Esophagus muscularis mucosa (tissue), 4 donors: ENCODE measurements at regions of chr19 and their contacts with region 1.

Region 1: DNA sequence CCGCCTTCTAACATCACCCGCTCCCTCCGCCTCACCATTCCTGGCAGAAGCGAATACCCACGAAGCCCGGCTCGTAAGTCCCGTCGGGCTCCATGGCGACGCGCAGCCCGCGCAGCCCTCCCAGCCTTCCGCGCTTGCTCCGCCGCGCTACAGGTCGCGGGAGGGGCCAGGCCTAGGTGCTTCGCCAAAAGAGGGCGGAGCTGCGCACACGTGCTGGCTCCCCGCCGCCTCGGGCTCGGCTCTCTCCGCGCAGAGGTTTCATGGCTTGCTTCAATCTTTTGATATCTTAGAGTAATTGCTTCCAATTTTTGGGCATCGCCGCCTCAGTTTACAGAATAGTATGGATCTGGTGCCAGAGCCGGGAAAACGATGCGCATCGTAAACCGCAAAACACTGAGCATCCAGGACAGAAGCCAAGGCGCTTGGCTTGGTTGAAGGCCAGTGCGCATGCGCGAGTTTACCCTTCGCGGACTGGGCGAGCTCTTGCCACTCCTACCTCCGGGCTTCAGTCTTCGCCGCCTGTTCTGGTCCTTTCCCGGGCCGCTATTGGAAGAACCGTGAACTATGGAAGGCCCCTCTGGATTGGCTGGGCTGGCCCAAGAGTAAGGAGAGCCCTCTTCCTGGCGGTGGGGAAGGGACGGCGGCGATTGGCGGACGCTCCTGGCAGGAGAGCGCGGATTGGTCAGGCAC is at the start of gene POLR2I:
- DNase-seq: peak; percentile 100
- H3K4me3 ChIP-seq: peak within 1 kb of the TSS; percentile 72 to 80 (median 74)
- H3K27ac ChIP-seq: peak within 1 kb of the TSS; percentile 88 to 96 (median 91)
- H3K4me1 ChIP-seq: peaks cover 23 to 53% (median 38%) of the 10 kb centered on the region in 4 donors
- H3K27me3 ChIP-seq: no peaks in the 10 kb centered on the region
- CTCF ChIP-seq: no peak
- EP300 ChIP-seq: no peak
- POLR2A ChIP-seq: peak; percentile 65
- total RNA-seq, gene POLR2I: 64.8 to 152 (median 85.7) TPM

Region 2: DNA sequence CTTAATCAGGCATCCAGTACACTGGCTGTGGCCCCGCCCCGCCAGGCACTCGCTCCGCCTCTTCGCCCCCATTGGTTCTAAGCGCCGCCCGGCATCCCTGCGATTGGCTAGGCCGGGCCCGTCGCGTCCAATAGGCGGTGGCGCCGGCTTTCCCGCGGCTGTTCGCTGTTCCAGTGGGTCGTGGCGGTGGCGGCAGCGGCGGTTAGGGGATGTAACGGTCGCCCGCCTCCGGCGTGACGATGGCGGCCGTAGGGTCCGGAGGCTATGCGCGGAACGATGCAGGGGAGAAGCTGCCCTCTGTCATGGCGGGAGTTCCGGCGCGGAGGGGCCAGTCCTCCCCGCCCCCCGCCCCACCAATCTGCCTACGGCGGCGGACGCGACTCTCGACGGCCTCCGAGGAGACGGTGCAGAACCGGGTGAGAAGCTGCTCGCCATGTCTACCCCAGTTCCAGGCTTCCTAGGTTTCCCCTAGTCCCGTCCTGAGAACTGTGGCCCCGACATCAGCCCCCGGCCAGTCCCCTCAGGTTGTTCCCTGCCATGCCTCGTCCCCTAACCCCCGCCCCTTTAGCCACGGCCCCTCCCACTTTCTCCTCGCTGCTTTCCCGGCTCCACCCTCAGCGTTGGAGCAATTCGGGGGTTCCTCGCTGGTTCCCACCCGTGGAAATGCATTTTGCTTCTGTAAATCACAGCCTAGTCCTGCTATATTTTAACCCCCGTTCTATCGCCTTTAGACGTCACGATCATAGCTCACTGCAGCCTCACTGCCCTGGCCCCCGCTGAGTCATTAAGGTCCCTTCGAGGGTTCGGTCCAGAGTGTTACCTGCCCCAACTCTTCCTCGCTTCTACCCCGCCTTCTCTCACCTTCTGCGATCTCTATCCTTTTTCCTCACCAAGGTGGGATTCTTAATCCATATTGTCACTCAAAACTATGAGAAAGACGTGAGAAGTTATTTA is 59.9 kb before region 1 on chr19 and contains the start of gene WDR62:
- intact Hi-C with region 1: loop called (anchors 5 kb)
- DNase-seq: no peak
- H3K4me3 ChIP-seq: peak within 1 kb of the TSS; percentile 61 to 73 (median 68)
- H3K27ac ChIP-seq: peak within 1 kb of the TSS; percentile 87 to 95 (median 91)
- H3K4me1 ChIP-seq: peaks cover 7 to 29% (median 22%) of the 10 kb centered on the region in 4 donors
- H3K27me3 ChIP-seq: no peaks in the 10 kb centered on the region
- CTCF ChIP-seq: no peak
- EP300 ChIP-seq: no peak
- POLR2A ChIP-seq: no peak
- total RNA-seq, gene WDR62: 0.26 to 0.52 (median 0.50) TPM in 3 of 4 donors, not detected in the other